ENCODE measurements at regions of chr3 and their contacts with region 1.

Region 1: GRCh38 chr3:183180105-183180783 is 17.7 kb upstream of the LAMP3 start:
- DNase-seq: no peak
- H3K4me3 ChIP-seq: peak overlapping the region in 1 of 2 donors; percentile 58
- H3K27ac ChIP-seq: no peak overlapping the region
- H3K4me1 ChIP-seq: peaks cover 0 to 21% (median 13%) of the 10 kb centered on the region in 4 donors
- H3K27me3 ChIP-seq: peaks cover 0 to 53% of the 10 kb centered on the region in 2 donors
- CTCF ChIP-seq: no peak

Region 2: DNA sequence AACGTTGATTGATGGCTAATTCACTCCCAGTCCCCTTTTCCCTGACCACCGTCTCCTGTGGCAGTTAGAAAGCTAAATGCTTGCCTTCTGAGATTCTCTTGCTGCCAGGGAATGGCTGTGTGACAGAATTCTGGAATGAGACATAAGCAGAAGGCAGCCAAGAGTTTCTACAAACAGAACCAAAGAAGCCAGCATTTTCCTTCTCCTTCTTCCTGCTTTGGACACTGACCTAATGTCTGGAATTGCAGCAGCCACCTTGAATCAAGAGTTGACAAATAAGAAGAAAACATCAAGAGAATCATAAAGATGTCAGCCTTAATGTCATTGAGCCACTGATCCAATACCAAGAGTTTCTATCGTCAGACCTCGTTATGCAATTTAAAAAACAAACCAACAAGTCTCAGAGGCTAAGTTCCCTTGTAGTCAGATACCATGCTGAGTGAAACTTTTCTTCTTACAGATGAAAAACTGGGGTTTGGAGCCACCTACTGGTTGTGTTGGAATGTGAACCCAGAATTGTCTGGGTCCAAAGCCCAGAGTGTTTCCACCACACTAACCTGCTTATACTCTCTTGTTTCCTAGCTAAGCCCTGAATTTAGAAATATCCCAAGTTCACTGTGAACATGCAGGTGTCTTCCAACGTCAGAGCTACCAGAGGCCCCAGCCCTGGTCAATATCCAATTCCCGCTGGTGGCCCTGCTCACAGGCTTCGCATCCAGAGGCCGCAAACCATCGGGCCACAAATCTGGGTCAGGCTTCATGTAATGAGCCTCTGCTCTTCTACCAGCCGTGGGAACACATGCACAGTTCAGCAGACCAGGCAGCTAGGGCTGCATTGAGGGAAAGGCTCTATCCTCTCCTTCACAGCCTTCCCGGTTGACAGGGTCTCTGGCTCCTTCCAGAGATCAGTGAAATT is 205.7 kb after region 1 on chr3:
- intact Hi-C with region 1: loop called (anchors 5 kb)
- DNase-seq: peak in 1 of 2 donors; percentile 41
- H3K4me3 ChIP-seq: no peak overlapping the region
- H3K27ac ChIP-seq: no peak overlapping the region
- H3K4me1 ChIP-seq: no peaks in the 10 kb centered on the region
- H3K27me3 ChIP-seq: no peaks in the 10 kb centered on the region
- CTCF ChIP-seq: peak; percentile 72 to 74